ENCODE measurements at regions of chr1 and their contacts with region 1.

Region 1: GRCh38 chr1:11719313-11720032 is 16.5 kb upstream of the AGTRAP start:
- DNase-seq: peak; percentile 72
- H3K4me3 Mint-ChIP-seq: peak overlapping the region; percentile 81
- H3K27ac Mint-ChIP-seq: peak overlapping the region; percentile 78
- H3K4me1 Mint-ChIP-seq: peaks cover 16% of the 10 kb centered on the region
- H3K27me3 Mint-ChIP-seq: peaks cover 6% of the 10 kb centered on the region

Region 2: DNA sequence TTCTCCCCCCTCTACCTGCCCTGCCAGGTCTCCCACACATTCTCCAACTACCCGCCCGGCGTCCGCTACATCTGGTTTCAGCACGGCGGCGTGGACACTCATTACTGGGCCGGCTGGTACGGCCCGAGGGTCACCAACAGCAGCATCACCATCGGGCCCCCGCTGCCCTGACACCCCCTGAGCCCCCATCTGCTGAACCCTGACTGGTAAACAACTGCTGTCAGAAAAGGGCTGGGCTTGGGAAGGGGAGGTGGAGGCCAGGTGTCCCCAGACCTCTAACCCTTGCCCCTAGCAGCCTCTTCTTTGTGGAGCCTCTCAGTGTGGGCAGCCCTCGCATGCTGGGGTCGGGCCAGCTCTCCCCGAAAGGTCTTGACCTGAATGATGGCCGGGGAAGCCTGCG is 58.4 kb before region 1 on chr1:
- intact Hi-C with region 1: loop called (anchors 1 kb)
- DNase-seq: no peak
- H3K4me3 Mint-ChIP-seq: no peak overlapping the region
- H3K27ac Mint-ChIP-seq: no peak overlapping the region
- H3K4me1 Mint-ChIP-seq: no peaks in the 10 kb centered on the region
- H3K27me3 Mint-ChIP-seq: no peaks in the 10 kb centered on the region